KBM-7 (cell line): ENCODE measurements at regions of chr3 and their contacts with region 1.

Region 1: DNA sequence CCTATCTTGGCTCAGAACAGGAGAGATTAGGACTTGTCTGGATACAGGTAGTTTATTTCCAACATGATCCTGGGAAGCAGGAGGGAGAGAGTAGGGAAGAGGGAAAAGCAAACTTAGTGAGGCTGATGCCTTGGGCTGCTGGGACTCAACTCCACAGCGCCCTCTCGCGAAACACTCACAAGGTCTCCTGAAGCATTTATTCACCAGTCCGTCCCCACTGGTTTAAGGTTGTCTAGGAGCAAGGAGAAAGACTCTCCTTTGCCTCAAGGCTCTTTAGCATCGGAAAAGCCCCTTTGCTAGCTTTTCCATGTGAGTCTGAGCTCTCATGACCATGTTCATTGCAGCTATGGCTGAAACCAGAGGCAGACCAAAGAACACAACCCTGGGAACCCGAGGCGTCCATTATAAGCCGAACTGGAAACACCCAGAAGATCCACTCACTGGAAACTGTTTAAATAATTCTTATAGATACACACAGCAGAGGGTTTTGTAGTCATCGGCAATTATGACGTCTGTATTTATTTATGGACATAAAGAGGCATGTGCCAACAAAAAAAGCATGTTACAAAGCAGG is 244.5 kb downstream of the CD47 start:
- DNase-seq: peak; percentile 64

Region 2: DNA sequence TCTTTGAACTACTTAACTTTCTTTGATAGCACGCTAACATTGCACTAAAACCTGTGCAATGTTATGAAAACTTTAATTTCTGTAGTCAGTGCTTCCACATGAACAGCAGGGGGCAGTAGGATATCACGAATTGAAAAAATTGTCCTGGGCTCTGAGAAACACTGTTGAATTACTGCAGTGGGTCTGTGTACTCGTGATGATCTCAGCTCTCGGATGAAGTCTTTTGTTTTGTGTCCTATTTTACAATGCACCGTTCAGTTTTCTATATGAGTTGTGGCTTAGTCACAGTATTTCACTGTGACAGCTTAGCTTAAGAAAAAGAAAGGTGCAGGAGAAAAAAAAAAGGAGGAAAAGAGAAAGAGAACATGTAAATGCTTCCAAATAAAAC is 610.4 kb before region 1 on chr3:
- in situ Hi-C with region 1: loop called (anchors 25 kb)
- DNase-seq: peak; percentile 61